Activated CD4-positive, alpha-beta T cell treated with anti-CD3 and anti-CD28 coated beads for 36 hours (primary cell): ENCODE measurements at regions of chr11 and their contacts with region 1.

Region 1: GRCh38 chr11:86244522-86245368 is at the start of gene EED:
- DNase-seq: peak; percentile 97
- ATAC-seq: peak; percentile 79
- H3K4me3 Mint-ChIP-seq: no peak within 1 kb of the TSS
- H3K27ac Mint-ChIP-seq: no peak within 1 kb of the TSS
- H3K4me1 Mint-ChIP-seq: peaks cover 42% of the 10 kb centered on the region
- H3K27me3 Mint-ChIP-seq: peaks cover 3% of the 10 kb centered on the region
- total RNA-seq, gene EED: 90.3 to 127 TPM

Region 2: DNA sequence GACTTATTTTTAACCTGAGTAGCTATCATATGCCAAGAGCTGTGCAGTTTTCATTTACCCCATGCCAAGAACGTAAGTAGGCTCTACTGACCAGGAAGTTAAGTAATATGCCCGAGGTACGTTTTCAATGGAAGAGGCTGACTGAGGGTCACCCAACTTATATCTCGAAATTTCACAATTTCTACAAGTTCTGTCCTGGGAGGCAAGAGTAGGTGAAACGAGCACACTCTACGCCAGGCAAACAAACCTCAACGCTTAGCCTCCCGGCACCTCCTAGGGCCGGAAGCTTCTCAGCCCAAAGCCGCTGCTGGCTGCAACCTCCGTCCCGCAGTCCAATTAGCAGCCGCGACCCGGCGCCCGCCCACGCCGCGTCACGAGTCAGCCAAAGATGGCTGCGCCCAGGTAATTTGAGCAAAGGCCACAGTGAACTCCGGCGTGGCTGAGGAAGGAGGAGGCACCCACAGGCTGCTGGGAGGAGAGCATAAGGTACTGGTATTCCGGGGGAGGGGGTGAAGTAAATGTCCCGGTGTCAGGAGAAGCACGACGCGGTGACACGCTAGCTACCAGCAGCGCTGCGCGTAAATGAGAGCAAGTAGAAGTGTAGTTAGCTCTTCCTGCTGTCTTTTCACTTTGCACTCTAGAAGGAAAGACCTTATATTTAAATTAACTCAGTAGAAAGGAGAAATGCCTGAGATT is 597.0 kb before region 1 on chr11 and contains the start of gene TMEM126A:
- CTCF ChIA-PET with region 1: no interaction called
- POLR2A ChIA-PET with region 1: no interaction called
- intact Hi-C with region 1: loop called in 1 of 2 experiments (anchors 5 kb)
- DNase-seq: peak; percentile 96
- ATAC-seq: peak; percentile 97
- H3K4me3 Mint-ChIP-seq: peak within 1 kb of the TSS; percentile 99
- H3K27ac Mint-ChIP-seq: peak within 1 kb of the TSS; percentile 96
- H3K4me1 Mint-ChIP-seq: peaks cover 22% of the 10 kb centered on the region
- H3K27me3 Mint-ChIP-seq: peaks cover 12% of the 10 kb centered on the region
- total RNA-seq, gene TMEM126A: 21.7 to 37.4 TPM

Region 3: DNA sequence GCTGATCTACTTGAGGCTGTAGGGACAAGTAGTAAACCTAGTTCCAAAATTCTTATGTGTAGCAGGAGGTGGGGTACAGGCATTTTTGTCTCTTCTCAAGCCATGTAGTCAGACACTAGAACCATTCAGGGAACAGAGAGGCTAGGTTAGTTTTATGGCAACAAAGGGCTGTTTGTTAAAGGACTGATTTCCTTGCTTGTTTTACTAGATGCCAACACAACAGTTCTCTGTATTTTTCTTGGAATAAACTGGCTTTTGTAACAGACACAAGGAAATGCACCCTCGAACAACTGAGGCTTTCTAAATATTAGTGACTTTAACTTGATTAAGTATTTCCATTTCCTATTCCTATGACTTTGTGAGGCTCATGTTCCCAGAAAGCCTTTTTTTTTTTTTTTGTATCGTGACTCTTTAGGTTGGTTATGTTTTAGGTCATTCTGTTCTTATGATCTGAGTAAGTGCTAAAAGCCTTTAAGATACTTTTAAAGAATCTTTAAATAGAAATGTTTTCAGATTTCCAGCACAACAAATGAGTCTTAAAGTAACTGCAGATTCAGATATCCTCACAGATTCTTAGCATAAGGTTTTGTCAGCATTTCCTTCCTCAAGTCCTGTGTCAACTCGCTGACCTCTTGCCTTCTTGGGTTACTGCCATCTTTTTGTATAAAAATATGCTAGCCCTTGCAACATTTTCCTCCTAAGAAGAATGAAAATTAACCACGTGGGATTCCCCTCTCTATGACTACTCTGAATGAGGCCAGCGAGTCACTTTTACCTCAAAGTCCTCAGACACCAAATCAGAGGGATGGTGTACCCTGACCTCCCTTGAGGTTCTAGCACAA is 297.1 kb before region 1 on chr11:
- CTCF ChIA-PET with region 1: no interaction called
- POLR2A ChIA-PET with region 1: no interaction called
- intact Hi-C with region 1: loop called in 1 of 2 experiments (anchors 1 kb)
- DNase-seq: peak; percentile 62
- ATAC-seq: peak; percentile 80
- H3K4me3 Mint-ChIP-seq: peak overlapping the region; percentile 46
- H3K27ac Mint-ChIP-seq: peak overlapping the region; percentile 97
- H3K4me1 Mint-ChIP-seq: peaks cover 48% of the 10 kb centered on the region
- H3K27me3 Mint-ChIP-seq: no peaks in the 10 kb centered on the region

Region 4: GRCh38 chr11:86047275-86047991 is 197.3 kb before region 1 on chr11:
- CTCF ChIA-PET with region 1: interaction called, 4 read pairs
- POLR2A ChIA-PET with region 1: interaction called, 5 read pairs
- intact Hi-C with region 1: loop called (anchors 1 kb)
- DNase-seq: peak; percentile 75
- ATAC-seq: peak; percentile 73
- H3K4me3 Mint-ChIP-seq: peak overlapping the region; percentile 65
- H3K27ac Mint-ChIP-seq: peak overlapping the region; percentile 96
- H3K4me1 Mint-ChIP-seq: peaks cover 96% of the 10 kb centered on the region
- H3K27me3 Mint-ChIP-seq: no peaks in the 10 kb centered on the region

Region 5: GRCh38 chr11:86202013-86202336 is 42.8 kb before region 1 on chr11:
- CTCF ChIA-PET with region 1: interaction called, 3 read pairs
- POLR2A ChIA-PET with region 1: no interaction called
- intact Hi-C with region 1: loop called in 1 of 2 experiments (anchors 1 kb)
- DNase-seq: peak; percentile 39
- ATAC-seq: peak; percentile 94
- H3K4me3 Mint-ChIP-seq: no peak overlapping the region
- H3K27ac Mint-ChIP-seq: no peak overlapping the region
- H3K4me1 Mint-ChIP-seq: peaks cover 6% of the 10 kb centered on the region
- H3K27me3 Mint-ChIP-seq: peaks cover under 1% of the 10 kb centered on the region

Region 6: DNA sequence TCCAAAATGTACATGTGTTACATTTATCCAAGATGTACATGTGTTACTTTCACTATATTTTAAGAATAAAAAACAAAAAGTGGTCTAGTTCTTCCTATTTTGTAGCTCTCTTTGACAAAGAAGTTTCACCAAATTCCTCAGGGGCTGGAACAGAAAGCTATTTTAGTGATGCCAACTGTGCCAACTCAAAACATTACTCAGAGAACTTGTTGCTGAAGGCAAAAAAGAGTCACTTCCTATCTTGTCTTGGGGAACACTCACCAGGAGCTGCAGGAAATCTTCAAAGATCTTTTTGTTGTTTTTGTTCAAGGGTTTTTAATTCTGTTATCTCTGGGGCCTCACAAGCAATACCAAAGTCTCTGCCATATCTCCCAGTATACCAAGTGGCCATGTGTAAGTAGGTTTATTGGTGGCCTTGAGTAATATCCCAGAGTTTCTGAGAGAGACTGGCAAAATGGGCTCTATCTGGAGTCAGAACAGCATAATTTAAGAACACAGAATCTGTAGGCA is 13.8 kb before region 1 on chr11:
- CTCF ChIA-PET with region 1: interaction called, 20 read pairs
- POLR2A ChIA-PET with region 1: interaction called, 5 read pairs
- intact Hi-C with region 1: loop called (anchors 1 kb)
- DNase-seq: no peak
- ATAC-seq: peak; percentile 28
- H3K4me3 Mint-ChIP-seq: peak overlapping the region; percentile 20
- H3K27ac Mint-ChIP-seq: peak overlapping the region; percentile 86
- H3K4me1 Mint-ChIP-seq: peaks cover 65% of the 10 kb centered on the region
- H3K27me3 Mint-ChIP-seq: no peaks in the 10 kb centered on the region

Region 7: DNA sequence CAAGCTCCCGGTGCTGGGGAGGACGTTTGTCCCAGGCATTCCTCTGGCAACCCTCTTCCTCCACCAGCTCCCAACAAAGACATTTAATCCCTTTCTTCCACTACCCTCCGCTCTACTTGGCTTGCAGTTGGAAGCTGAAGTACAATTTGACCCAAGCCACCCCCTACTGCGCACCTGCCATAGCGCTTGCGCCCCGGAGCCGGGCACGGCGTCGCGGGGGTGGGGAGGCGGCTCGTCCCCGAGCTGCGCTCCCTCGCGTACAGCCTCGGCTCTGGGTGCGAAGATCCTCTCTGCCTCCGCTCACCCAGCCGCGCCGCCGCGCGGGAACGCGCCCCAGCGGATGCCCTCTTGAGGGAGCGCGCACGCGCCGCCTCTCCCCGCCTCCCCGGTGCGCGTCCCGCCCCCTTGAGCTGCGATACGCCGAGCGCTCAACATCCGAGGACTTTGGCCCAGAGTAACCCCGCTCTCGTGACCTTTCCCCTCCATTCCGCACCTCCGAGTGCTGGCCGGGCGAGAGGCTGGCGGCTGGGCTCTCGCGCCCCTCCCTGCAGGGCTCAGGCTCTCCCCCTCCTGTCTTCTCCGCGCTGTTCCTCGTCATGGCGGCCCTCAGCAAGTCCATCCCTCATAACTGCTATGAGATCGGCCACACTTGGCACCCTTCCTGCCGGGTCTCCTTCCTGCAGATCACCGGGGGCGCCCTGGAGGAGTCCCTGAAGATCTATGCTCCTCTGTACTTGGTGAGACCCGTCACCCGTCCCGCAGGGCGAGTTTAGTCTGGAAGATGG is 792.9 kb after region 1 on chr11 and contains the start of gene TMEM135:
- CTCF ChIA-PET with region 1: no interaction called
- POLR2A ChIA-PET with region 1: no interaction called
- intact Hi-C with region 1: loop called in 1 of 2 experiments (anchors 5 kb)
- DNase-seq: peak; percentile 97
- ATAC-seq: peak; percentile 97
- H3K4me3 Mint-ChIP-seq: peak within 1 kb of the TSS; percentile 97
- H3K27ac Mint-ChIP-seq: peak within 1 kb of the TSS; percentile 93
- H3K4me1 Mint-ChIP-seq: peaks cover 40% of the 10 kb centered on the region
- H3K27me3 Mint-ChIP-seq: no peaks in the 10 kb centered on the region
- total RNA-seq, gene TMEM135: 25.5 to 26.0 TPM